Activated CD8-positive, alpha-beta T cell treated with anti-CD3 and anti-CD28 coated beads for 36 hours (primary cell): ENCODE measurements at regions of chr17 and their contacts with region 1.

Region 1: DNA sequence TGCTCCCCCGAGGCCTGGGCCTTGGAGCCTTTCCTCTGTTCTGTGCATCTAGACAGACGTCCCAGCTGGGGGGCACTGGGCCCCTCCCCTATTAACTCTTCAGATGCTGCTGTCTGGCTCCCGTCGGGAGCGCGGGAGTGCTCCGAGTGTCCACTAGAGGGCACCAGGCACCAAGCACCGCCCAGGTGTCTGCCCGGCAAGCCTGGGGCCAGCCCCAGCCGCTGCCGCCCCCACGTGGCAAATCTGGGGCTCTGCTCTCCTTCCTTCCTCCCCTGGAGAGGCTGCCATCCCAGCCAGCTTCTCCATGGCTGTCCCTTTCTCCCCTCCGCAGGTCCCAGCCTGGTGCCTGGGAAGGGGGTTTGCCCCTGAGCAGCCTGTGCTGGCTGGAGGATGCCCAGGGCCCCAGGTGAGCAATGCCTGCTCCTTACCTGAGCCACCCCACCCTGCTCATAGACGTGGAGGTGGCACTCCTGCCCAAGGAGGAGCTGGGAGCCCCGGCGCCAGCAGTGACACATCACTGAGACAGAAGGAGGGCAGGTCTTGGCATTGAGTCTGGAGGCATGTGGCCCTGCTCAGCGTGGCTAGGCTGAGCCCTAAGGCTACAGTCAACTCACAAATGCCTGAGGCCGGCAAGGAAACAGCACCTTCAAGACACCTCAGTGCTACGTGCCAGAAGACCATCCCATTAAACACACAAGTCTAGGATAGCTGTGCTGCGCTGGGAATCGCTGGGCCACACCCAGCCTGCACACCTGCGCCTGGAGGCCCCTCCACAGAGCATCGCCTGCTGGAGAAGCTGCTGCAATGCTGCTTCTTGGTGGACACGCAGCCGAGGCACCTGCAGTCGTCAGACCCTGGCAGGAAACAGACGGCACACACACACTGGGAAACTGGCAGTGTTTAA is 19.7 kb downstream of the TMEM235 start:
- DNase-seq: peak; percentile 89
- ATAC-seq: peak; percentile 78
- H3K4me3 Mint-ChIP-seq: peak overlapping the region; percentile 29
- H3K27ac Mint-ChIP-seq: peak overlapping the region; percentile 61
- H3K4me1 Mint-ChIP-seq: peaks cover 32% of the 10 kb centered on the region
- H3K27me3 Mint-ChIP-seq: no peaks in the 10 kb centered on the region
- CTCF ChIP-seq: peak; percentile 98

Region 2: GRCh38 chr17:78128551-78129350 is 122.4 kb before region 1 on chr17 and contains the start of gene TMC6:
- CTCF ChIA-PET with region 1: interaction called, 10 read pairs
- POLR2A ChIA-PET with region 1: no interaction called
- intact Hi-C with region 1: no loop called
- DNase-seq: peak; percentile 90
- ATAC-seq: peak; percentile 22
- H3K4me3 Mint-ChIP-seq: peak within 1 kb of the TSS; percentile 78
- H3K27ac Mint-ChIP-seq: peak within 1 kb of the TSS; percentile 97
- H3K4me1 Mint-ChIP-seq: peaks cover 38% of the 10 kb centered on the region
- H3K27me3 Mint-ChIP-seq: no peaks in the 10 kb centered on the region
- CTCF ChIP-seq: no peak
- total RNA-seq, gene TMC6: 209 to 213 TPM

Region 3: GRCh38 chr17:78226749-78227399 is 24.3 kb before region 1 on chr17:
- CTCF ChIA-PET with region 1: interaction called, 22 read pairs
- POLR2A ChIA-PET with region 1: interaction called, 3 read pairs
- intact Hi-C with region 1: no loop called
- DNase-seq: no peak
- ATAC-seq: no peak
- H3K4me3 Mint-ChIP-seq: no peak overlapping the region
- H3K27ac Mint-ChIP-seq: no peak overlapping the region
- H3K4me1 Mint-ChIP-seq: peaks cover 8% of the 10 kb centered on the region
- H3K27me3 Mint-ChIP-seq: peaks cover 22% of the 10 kb centered on the region
- CTCF ChIP-seq: no peak

Region 4: DNA sequence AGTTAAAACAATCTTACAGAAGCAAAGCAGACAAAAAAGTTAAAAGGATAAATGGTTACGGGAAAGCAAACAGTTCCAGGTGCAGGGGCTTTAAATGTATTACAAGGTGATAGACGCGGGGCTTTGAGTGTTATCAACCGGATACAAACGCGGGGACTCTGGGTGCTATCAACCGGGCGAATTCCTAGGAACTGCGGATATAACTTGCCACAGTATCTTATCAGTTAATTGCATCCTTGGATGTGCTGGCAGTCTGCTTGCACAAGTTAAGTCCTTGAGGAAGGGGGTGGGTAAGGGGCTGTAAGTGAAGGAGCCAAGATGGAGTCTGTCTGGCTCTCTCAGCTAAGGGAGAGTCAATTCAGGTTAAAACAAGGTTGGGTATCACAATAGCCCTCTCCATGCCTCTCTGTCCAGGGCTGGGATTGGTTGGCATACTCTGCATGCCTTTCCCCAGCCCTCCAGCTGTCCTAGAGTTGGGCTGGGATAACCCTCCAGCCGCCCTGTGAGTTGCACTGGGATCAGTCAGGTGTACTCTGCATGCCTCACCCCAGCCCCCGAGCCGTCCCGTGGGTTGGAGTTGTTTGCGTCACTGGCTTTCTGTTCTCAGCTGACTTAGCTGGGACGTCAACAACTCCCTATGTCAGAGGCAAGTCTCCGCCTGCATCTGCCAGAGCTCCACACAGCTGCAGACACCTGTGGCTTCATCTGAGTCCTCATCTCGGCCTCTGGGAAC is 21.2 kb after region 1 on chr17:
- CTCF ChIA-PET with region 1: interaction called, 12 read pairs
- POLR2A ChIA-PET with region 1: interaction called, 10 read pairs
- intact Hi-C with region 1: no loop called
- DNase-seq: peak; percentile 82
- ATAC-seq: peak; percentile 92
- H3K4me3 Mint-ChIP-seq: peak overlapping the region; percentile 35
- H3K27ac Mint-ChIP-seq: peak overlapping the region; percentile 36
- H3K4me1 Mint-ChIP-seq: peaks cover 24% of the 10 kb centered on the region
- H3K27me3 Mint-ChIP-seq: no peaks in the 10 kb centered on the region
- CTCF ChIP-seq: no peak

Region 5: DNA sequence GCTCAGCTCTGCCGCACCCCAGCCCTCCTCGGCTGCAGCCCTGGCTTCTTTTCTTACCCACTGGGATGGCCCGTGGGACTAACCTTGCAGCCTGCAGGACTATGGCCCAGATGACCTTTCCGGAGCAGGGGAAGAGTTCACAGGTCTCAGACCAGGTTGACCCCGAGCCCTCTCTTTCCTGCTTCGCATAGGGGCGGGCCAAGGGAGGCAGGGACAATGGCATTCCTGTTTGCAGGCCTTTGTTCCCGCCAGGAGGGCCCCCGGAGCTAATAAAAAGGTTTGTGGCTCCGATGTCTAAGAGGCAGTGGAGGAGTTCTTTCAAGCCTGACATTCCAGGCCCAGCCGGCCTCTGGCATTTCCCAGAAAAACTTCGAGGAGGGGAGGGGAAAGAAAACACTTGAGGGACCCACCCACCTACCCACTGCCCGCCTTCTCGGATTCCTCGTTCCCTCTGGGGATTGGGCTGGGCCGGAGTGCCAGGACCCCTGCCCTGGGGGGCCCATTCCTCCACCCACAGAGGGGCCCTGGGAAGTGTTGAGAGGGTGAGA is 114.5 kb after region 1 on chr17:
- CTCF ChIA-PET with region 1: interaction called, 14 read pairs
- POLR2A ChIA-PET with region 1: no interaction called
- intact Hi-C with region 1: no loop called
- DNase-seq: no peak
- ATAC-seq: no peak
- H3K4me3 Mint-ChIP-seq: no peak overlapping the region
- H3K27ac Mint-ChIP-seq: no peak overlapping the region
- H3K4me1 Mint-ChIP-seq: peaks cover 22% of the 10 kb centered on the region
- H3K27me3 Mint-ChIP-seq: peaks cover 14% of the 10 kb centered on the region
- CTCF ChIP-seq: no peak

Region 6: GRCh38 chr17:78412403-78412802 is 161.3 kb after region 1 on chr17:
- CTCF ChIA-PET with region 1: interaction called, 11 read pairs
- POLR2A ChIA-PET with region 1: no interaction called
- intact Hi-C with region 1: no loop called
- DNase-seq: peak; percentile 68
- ATAC-seq: peak; percentile 32
- H3K4me3 Mint-ChIP-seq: no peak overlapping the region
- H3K27ac Mint-ChIP-seq: peak overlapping the region; percentile 90
- H3K4me1 Mint-ChIP-seq: peaks cover 66% of the 10 kb centered on the region
- H3K27me3 Mint-ChIP-seq: no peaks in the 10 kb centered on the region
- CTCF ChIP-seq: peak; percentile 56

Region 7: GRCh38 chr17:78458736-78459331 is 207.7 kb after region 1 on chr17:
- CTCF ChIA-PET with region 1: no interaction called
- POLR2A ChIA-PET with region 1: no interaction called
- intact Hi-C with region 1: no loop called
- DNase-seq: no peak
- ATAC-seq: no peak
- H3K4me3 Mint-ChIP-seq: no peak overlapping the region
- H3K27ac Mint-ChIP-seq: no peak overlapping the region
- H3K4me1 Mint-ChIP-seq: no peaks in the 10 kb centered on the region
- H3K27me3 Mint-ChIP-seq: no peaks in the 10 kb centered on the region
- CTCF ChIP-seq: no peak